ENCODE measurements at regions of chr16 and their contacts with region 1.

Region 1: GRCh38 chr16:57648590-57649442 is 19.3 kb upstream of the ADGRG3 start:
- DNase-seq: peak; percentile 90
- H3K4me3 Mint-ChIP-seq: no peak overlapping the region
- H3K27ac Mint-ChIP-seq: peak overlapping the region; percentile 51
- H3K4me1 Mint-ChIP-seq: peaks cover 36% of the 10 kb centered on the region
- H3K27me3 Mint-ChIP-seq: peaks cover 3% of the 10 kb centered on the region

Region 2: DNA sequence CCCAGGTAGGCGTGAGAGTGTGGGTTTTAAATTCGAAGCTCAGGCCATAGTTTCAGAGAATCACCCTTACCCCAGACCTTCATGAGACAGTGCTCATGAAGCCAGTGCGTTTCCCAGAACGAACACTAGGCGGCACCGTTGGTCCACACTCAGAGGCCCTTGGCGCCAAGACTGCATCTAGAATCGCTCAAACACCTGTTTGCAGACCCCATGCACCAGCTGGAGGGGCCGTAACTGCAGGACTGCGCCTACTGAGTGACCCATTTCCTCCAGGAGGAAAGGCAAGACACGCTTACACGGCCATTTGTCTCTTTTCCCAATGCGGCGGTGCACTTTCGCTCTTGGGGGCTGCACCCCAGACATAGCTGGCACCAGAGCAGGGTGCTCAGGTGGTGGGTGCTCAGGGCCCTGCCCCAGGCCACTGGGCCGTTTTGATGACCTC is 72.4 kb before region 1 on chr16:
- CTCF ChIA-PET with region 1: interaction called, 154 read pairs
- DNase-seq: peak; percentile 90
- H3K4me3 Mint-ChIP-seq: no peak overlapping the region
- H3K27ac Mint-ChIP-seq: peak overlapping the region; percentile 87
- H3K4me1 Mint-ChIP-seq: peaks cover 49% of the 10 kb centered on the region
- H3K27me3 Mint-ChIP-seq: peaks cover 10% of the 10 kb centered on the region

Region 3: GRCh38 chr16:57591086-57591869 is 57.5 kb before region 1 on chr16:
- CTCF ChIA-PET with region 1: interaction called, 133 read pairs
- DNase-seq: peak; percentile 80
- H3K4me3 Mint-ChIP-seq: peak overlapping the region; percentile 6
- H3K27ac Mint-ChIP-seq: peak overlapping the region; percentile 87
- H3K4me1 Mint-ChIP-seq: peaks cover 51% of the 10 kb centered on the region
- H3K27me3 Mint-ChIP-seq: peaks cover 24% of the 10 kb centered on the region

Region 4: GRCh38 chr16:57600048-57600835 is 48.6 kb before region 1 on chr16:
- CTCF ChIA-PET with region 1: interaction called, 133 read pairs
- DNase-seq: peak; percentile 51
- H3K4me3 Mint-ChIP-seq: no peak overlapping the region
- H3K27ac Mint-ChIP-seq: peak overlapping the region; percentile 42
- H3K4me1 Mint-ChIP-seq: peaks cover 58% of the 10 kb centered on the region
- H3K27me3 Mint-ChIP-seq: peaks cover 7% of the 10 kb centered on the region

Region 5: DNA sequence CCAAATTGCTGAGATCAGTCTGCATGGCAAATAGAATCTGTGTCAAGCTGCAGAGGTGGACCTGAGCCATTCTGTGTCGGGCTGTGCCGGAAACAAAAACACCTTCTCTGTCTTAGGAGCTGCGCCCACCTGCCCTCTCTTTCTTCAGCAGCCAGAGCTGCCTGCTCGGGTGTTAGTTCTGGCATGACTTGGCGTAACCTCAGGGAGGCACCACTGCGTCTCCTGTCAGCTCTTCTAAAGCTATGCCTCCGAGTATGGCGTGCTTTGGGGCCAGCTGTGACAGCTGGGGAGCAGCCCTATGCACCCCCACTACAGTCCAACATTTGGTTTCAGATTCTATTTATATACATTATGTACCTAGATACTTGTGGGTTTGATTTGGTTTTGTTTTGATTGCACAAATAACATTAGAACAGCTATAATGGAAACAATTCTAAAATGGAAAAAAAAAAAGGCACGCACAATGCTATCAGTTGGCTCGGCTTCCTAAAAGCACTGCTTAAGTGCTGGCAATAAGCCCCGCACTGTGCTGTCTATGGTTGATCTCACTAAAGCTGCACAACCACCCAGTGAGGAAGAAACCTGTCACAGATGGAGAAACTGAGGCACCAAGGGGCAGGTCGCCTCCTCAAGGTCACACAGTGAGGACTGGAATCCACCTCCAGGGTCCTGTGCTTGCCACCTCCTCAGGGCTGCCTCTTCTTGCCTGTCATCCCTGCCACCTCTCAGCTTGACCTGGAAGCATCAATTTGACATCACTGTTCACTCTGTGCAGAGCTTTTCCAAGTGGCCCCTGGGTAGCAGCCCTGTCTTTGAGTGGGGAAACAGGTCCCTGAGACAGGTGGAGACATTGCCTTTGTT is 39.0 kb before region 1 on chr16:
- CTCF ChIA-PET with region 1: interaction called, 93 read pairs
- DNase-seq: peak; percentile 83
- H3K4me3 Mint-ChIP-seq: peak overlapping the region; percentile 46
- H3K27ac Mint-ChIP-seq: peak overlapping the region; percentile 86
- H3K4me1 Mint-ChIP-seq: peaks cover 49% of the 10 kb centered on the region
- H3K27me3 Mint-ChIP-seq: peaks cover 5% of the 10 kb centered on the region

Region 6: DNA sequence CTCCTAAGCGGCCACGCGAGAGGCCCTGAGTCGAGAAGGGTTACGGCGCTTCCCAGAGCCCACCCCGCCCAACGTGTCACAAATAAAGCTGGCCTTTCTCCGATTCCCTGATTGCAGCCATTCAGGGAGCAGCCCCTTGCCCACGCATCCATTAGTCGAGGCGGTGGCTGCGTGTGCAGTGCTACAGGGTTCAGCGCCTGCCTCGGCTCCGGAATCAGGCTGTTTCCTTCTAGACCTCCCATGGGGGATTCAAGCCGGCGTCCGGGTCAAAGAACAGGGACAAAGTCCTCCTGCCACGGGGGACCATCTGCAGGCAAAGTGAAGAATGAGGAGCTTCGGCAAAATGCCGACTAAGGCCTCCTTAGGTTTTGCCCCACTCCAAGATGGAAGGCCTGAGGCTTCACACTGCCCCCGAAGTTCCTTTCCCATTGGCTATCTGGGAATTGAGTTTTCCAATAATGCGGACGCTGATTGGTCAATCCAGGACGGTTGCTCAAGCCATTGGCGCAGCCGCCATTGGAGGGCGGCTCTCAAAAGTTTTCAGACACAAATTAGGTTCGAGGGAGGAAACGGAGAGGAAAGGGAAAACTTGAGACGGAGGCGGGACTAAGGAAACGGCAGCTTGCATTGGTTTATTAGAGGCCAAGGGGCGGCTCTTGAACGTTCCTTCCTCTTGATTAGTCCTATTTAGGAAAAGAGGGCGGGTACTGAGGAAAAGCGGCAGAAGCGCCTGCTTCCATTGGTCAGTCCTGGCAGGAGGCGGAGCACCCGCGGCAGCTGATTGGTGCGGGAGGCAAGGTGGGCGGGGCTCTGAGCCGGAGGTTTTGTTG is 86.3 kb after region 1 on chr16:
- CTCF ChIA-PET with region 1: interaction called, 17 read pairs
- DNase-seq: peak; percentile 99
- H3K4me3 Mint-ChIP-seq: peak overlapping the region; percentile 96
- H3K27ac Mint-ChIP-seq: peak overlapping the region; percentile 87
- H3K4me1 Mint-ChIP-seq: peaks cover 32% of the 10 kb centered on the region
- H3K27me3 Mint-ChIP-seq: peaks cover 4% of the 10 kb centered on the region